Naive thymus-derived CD4-positive, alpha-beta T cell (primary cell): ENCODE measurements at regions of chr1 and their contacts with region 1.

Region 1: DNA sequence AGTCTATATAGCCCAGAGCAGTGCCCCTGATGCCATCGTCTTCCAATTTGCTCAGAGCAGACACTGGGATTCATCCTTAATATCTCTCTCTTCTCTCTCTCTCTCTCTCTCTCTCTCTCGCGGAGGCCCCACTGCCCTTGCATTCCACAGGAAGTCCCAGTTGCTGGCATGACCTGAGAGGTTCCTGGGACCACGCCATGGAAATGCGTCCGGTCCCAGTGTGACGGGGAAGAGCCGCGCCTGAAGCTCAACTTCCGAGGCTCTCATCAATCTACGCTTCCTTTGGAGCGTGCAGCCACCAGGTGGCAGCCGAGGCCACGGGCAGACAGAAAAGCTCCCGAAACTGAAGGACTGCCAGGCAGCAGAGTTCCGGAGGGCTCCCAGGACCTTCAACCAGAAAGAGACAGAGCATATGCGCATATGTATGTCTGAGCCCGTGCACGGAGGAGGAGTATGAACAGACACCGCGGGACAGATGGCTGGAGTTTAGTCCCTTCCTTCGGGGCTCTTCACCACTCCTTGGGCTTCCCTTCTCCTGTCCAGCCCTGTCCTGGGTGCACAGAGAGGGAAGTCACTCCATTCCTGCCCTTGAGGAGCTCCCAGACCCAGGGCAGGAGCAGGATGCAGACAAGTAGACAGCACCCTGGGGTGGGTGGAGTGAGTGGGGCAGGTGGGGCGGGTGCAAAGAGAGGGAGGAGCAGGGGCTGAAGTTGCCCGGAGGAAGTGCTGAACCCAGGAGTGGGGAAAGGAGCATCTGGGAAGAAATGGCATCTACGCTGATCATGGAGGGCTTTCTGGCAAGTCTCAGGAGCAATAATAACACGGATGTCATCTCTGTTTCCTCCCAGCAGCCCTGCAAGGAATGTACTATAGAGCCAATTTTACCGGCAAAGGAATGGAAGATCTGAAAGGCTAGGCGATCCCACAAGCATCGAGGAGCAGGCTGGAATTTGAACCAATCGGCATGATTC is 10.5 kb downstream of the PDZK1IP1 start:
- DNase-seq: peak; percentile 14 to 81 (median 56)
- ATAC-seq: peak; percentile 76
- H3K4me3 ChIP-seq: peak overlapping the region; percentile 57
- H3K4me3 Mint-ChIP-seq: peak overlapping the region; percentile 68 to 88 (median 82)
- H3K27ac ChIP-seq: no peak overlapping the region
- H3K27ac Mint-ChIP-seq: peak overlapping the region in 3 of 9 donors; percentile 3 to 89 (median 60)
- H3K4me1 ChIP-seq: peaks cover 4 to 7% of the 10 kb centered on the region in 2 donors
- H3K4me1 Mint-ChIP-seq: peaks cover 9 to 22% (median 15%) of the 10 kb centered on the region in 7 donors
- H3K27me3 ChIP-seq: peaks cover 3 to 8% of the 10 kb centered on the region in 2 donors
- H3K27me3 Mint-ChIP-seq: peaks cover 26 to 55% (median 46%) of the 10 kb centered on the region in 5 donors

Region 2: DNA sequence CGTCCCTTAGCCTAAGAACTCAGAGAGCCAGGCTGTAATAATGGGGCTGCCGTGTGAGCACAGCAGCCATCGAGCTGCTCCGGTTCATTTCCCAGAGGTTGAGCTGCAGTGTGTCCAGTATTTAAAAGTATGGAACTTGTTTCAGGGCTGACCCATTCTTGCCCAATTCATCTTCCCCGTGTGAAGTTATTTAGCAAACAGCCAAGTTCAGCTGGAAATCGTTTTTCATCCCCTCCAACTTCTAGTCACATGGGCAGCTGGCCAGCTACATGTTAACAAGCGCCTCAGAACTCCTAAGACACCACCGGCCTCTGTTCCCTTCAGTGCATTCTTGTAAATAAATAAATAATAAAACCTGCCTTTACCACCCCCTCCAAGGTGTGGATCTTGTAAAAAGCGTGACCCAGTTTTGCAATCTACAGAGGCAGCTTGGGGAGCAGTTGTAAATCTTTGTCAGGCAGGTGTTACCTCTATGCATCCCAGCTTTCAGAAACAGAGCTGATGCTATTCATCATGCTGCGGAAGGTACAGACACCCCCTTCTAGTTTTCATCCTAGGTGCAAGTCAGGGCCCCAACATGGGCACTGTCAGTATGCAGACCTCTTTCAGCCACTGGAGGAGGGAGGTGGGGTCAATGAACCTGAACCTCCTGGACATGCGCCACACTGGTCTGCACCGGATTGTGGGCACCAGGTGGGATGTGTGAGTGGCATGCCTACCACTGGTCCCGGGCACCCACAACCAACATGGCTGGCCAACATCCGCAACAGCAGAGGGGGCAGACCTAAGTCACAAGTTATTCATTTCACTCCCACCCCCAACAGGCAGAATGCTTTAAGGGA is 609.2 kb before region 1 on chr1:
- CTCF ChIA-PET with region 1: no interaction called
- POLR2A ChIA-PET with region 1: no interaction called
- intact Hi-C with region 1: no loop called
- DNase-seq: no peak
- ATAC-seq: no peak
- H3K4me3 ChIP-seq: no peak overlapping the region
- H3K4me3 Mint-ChIP-seq: no peak overlapping the region
- H3K27ac ChIP-seq: no peak overlapping the region
- H3K27ac Mint-ChIP-seq: no peak overlapping the region
- H3K4me1 ChIP-seq: no peaks in the 10 kb centered on the region
- H3K4me1 Mint-ChIP-seq: peaks cover 0 to 3% (median 0%) of the 10 kb centered on the region in 7 donors
- H3K27me3 ChIP-seq: no peaks in the 10 kb centered on the region
- H3K27me3 Mint-ChIP-seq: no peaks in the 10 kb centered on the region

Region 3: GRCh38 chr1:47104816-47105215 is 74.5 kb before region 1 on chr1:
- CTCF ChIA-PET with region 1: no interaction called
- POLR2A ChIA-PET with region 1: no interaction called
- intact Hi-C with region 1: no loop called
- DNase-seq: no peak
- ATAC-seq: no peak
- H3K4me3 ChIP-seq: no peak overlapping the region
- H3K4me3 Mint-ChIP-seq: no peak overlapping the region
- H3K27ac ChIP-seq: no peak overlapping the region
- H3K27ac Mint-ChIP-seq: no peak overlapping the region
- H3K4me1 ChIP-seq: no peaks in the 10 kb centered on the region
- H3K4me1 Mint-ChIP-seq: no peaks in the 10 kb centered on the region
- H3K27me3 ChIP-seq: no peaks in the 10 kb centered on the region
- H3K27me3 Mint-ChIP-seq: peaks cover 9 to 36% (median 27%) of the 10 kb centered on the region in 5 donors

Region 4: GRCh38 chr1:47137925-47138615 is 41.2 kb before region 1 on chr1:
- CTCF ChIA-PET with region 1: no interaction called
- POLR2A ChIA-PET with region 1: no interaction called
- intact Hi-C with region 1: no loop called
- DNase-seq: no peak
- ATAC-seq: no peak
- H3K4me3 ChIP-seq: no peak overlapping the region
- H3K4me3 Mint-ChIP-seq: no peak overlapping the region
- H3K27ac ChIP-seq: no peak overlapping the region
- H3K27ac Mint-ChIP-seq: no peak overlapping the region
- H3K4me1 ChIP-seq: no peaks in the 10 kb centered on the region
- H3K4me1 Mint-ChIP-seq: no peaks in the 10 kb centered on the region
- H3K27me3 ChIP-seq: no peaks in the 10 kb centered on the region
- H3K27me3 Mint-ChIP-seq: peaks cover 7 to 26% (median 14%) of the 10 kb centered on the region in 5 donors

Region 5: GRCh38 chr1:47192458-47193384 is 13.4 kb after region 1 on chr1:
- CTCF ChIA-PET with region 1: interaction called, 23 read pairs
- POLR2A ChIA-PET with region 1: no interaction called
- intact Hi-C with region 1: no loop called
- DNase-seq: peak; percentile 25 to 72 (median 53)
- ATAC-seq: peak; percentile 84
- H3K4me3 ChIP-seq: no peak overlapping the region
- H3K4me3 Mint-ChIP-seq: no peak overlapping the region
- H3K27ac ChIP-seq: no peak overlapping the region
- H3K27ac Mint-ChIP-seq: peak overlapping the region in 1 of 9 donors; percentile 48
- H3K4me1 ChIP-seq: no peaks in the 10 kb centered on the region
- H3K4me1 Mint-ChIP-seq: peaks cover 0 to 2% (median 0%) of the 10 kb centered on the region in 7 donors
- H3K27me3 ChIP-seq: no peaks in the 10 kb centered on the region
- H3K27me3 Mint-ChIP-seq: peaks cover 7 to 20% (median 9%) of the 10 kb centered on the region in 5 donors

Region 6: DNA sequence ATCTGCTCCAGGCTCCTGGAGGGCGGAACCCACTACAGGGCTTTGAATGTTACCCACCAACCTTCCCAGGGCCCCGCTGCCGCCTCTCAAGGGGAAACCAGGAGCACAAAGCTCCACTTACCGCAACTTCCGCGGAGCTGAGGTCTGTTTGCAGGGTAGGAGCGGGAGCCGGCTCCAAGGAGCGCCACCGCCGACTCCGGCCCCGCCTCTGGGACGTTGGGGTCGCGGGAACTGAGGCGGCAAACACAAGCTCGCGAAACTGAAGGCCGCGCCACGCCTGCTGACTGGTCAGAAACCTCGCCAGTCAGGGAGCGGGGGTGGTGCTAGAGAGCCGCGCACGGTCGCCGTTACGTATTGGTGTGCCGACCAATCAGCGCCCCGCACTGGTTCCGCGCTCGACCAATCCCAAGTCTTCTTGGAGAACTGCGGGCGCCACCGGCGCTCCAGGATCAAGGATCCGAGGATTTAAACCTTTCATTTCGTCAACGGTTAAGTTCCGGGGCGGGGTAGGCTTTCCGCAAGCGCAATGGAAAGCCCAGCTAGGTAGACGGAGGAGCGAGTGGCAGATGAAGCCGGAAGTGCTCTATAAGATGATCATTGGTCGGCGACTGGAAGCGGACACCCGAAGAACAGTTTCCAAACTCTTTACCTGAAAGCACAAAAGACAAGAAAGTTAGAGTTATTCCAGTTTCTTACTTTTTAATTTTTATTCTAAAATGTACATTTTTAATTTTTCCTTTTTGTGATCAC is 134.8 kb after region 1 on chr1 and contains the start of gene STIL:
- CTCF ChIA-PET with region 1: no interaction called
- POLR2A ChIA-PET with region 1: no interaction called
- intact Hi-C with region 1: loop called in 1 of 2 experiments (anchors 5 kb)
- DNase-seq: peak; percentile 87 to 96 (median 95)
- ATAC-seq: peak; percentile 98
- H3K4me3 ChIP-seq: peak within 1 kb of the TSS; percentile 73
- H3K4me3 Mint-ChIP-seq: peak within 1 kb of the TSS; percentile 84 to 98 (median 93)
- H3K27ac ChIP-seq: peak within 1 kb of the TSS; percentile 78
- H3K27ac Mint-ChIP-seq: peak within 1 kb of the TSS; percentile 88 to 98 (median 95)
- H3K4me1 ChIP-seq: no peaks in the 10 kb centered on the region
- H3K4me1 Mint-ChIP-seq: peaks cover 4 to 26% (median 13%) of the 10 kb centered on the region in 7 donors
- H3K27me3 ChIP-seq: no peaks in the 10 kb centered on the region
- H3K27me3 Mint-ChIP-seq: peaks cover 0 to 3% (median 0%) of the 10 kb centered on the region in 5 donors
- total RNA-seq, gene STIL: 1.3 to 28.5 (median 1.9) TPM

Region 7: GRCh38 chr1:47437447-47438164 is 258.3 kb after region 1 on chr1 and contains the start of gene FOXD2:
- CTCF ChIA-PET with region 1: interaction called, 3 read pairs
- POLR2A ChIA-PET with region 1: no interaction called
- intact Hi-C with region 1: loop called (anchors 5 kb)
- DNase-seq: peak; percentile 85 to 99 (median 92)
- ATAC-seq: peak; percentile 92
- H3K4me3 ChIP-seq: peak within 1 kb of the TSS; percentile 76
- H3K4me3 Mint-ChIP-seq: peak within 1 kb of the TSS; percentile 84 to 95 (median 89)
- H3K27ac ChIP-seq: peak within 1 kb of the TSS; percentile 66
- H3K27ac Mint-ChIP-seq: peak within 1 kb of the TSS in 8 of 9 donors; percentile 46 to 86 (median 70)
- H3K4me1 ChIP-seq: peaks cover 8 to 33% of the 10 kb centered on the region in 2 donors
- H3K4me1 Mint-ChIP-seq: peaks cover 14 to 37% (median 27%) of the 10 kb centered on the region in 7 donors
- H3K27me3 ChIP-seq: peaks cover 0 to 20% of the 10 kb centered on the region in 2 donors
- H3K27me3 Mint-ChIP-seq: peaks cover 14 to 39% (median 19%) of the 10 kb centered on the region in 5 donors
- total RNA-seq, gene FOXD2: 0.16 to 0.59 (median 0.24) TPM

Region 8: DNA sequence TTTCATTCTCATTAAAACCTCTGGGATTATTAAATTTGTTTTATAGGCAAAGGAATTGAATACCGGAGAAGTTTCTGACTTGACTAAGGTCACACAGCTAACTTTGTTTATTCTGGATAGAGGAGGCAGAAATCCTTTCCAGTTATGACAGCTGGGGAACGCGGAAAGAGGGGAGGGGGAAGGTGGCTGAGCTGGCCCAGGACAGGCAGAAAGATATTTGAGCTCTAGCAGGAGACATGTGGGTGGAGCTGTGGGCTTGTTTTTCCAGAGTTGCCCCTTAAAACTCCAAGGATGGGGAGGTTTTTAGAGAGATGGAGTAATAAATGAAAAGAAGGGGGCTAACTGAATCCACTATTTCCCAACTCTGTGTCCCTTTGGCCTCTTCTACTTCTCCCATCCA is 286.3 kb after region 1 on chr1:
- CTCF ChIA-PET with region 1: no interaction called
- POLR2A ChIA-PET with region 1: no interaction called
- intact Hi-C with region 1: no loop called
- DNase-seq: no peak
- ATAC-seq: no peak
- H3K4me3 ChIP-seq: no peak overlapping the region
- H3K4me3 Mint-ChIP-seq: no peak overlapping the region
- H3K27ac ChIP-seq: no peak overlapping the region
- H3K27ac Mint-ChIP-seq: no peak overlapping the region
- H3K4me1 ChIP-seq: no peaks in the 10 kb centered on the region
- H3K4me1 Mint-ChIP-seq: no peaks in the 10 kb centered on the region
- H3K27me3 ChIP-seq: peaks cover 0 to 2% of the 10 kb centered on the region in 2 donors
- H3K27me3 Mint-ChIP-seq: peaks cover 28 to 48% (median 45%) of the 10 kb centered on the region in 5 donors

Region 9: DNA sequence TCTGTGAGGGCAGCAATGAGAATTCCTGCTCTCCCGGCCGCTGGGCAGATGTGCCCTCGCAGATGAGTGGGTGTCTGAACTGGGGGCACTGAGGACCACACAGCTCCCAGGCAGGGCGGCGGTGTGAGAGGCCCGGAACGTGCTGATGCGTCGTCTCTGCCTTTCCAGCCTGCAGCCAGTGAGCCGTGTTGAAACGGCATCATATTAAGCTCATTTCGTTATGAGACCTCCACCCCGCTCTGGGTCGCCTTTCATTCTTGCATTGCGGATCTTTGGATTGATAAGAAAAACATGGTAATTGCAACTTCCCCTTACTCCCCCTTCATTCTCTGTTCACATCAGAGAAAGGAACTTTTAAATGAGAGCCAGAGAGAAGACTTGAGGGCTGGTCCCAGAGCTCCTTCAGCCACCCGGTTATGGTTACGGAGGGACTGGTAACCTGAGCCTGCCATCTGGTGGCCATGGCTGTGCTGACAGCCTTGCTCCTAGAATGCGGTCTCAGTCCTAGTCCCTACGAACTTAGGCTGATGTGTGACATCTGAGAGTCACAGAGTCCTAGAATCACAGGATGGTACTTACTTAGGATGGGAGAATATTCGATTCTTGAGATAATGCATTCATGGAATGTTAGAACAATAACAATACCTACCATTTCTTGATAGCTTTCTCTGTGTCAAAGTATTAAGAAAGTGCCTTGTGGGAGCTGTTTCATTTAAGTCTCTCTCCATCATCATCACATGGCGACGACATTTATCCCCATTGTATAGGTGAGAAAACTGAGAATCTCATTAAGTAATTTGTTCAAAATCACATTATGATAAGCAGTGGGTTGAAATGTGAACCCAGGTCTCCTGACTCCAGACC is 546.9 kb after region 1 on chr1:
- CTCF ChIA-PET with region 1: interaction called, 4 read pairs
- POLR2A ChIA-PET with region 1: no interaction called
- intact Hi-C with region 1: loop called in 1 of 2 experiments (anchors 1 kb)
- DNase-seq: peak; percentile 9 to 56 (median 42)
- ATAC-seq: peak; percentile 79
- H3K4me3 ChIP-seq: no peak overlapping the region
- H3K4me3 Mint-ChIP-seq: peak overlapping the region; percentile 6 to 83 (median 64)
- H3K27ac ChIP-seq: no peak overlapping the region
- H3K27ac Mint-ChIP-seq: no peak overlapping the region
- H3K4me1 ChIP-seq: no peaks in the 10 kb centered on the region
- H3K4me1 Mint-ChIP-seq: peaks cover 0 to 11% (median 5%) of the 10 kb centered on the region in 7 donors
- H3K27me3 ChIP-seq: peaks cover 3 to 5% of the 10 kb centered on the region in 2 donors
- H3K27me3 Mint-ChIP-seq: peaks cover 36 to 66% (median 45%) of the 10 kb centered on the region in 5 donors